Gastrocnemius medialis (tissue), 4 donors: ENCODE measurements at regions of chr16 and their contacts with region 1.

Region 1: DNA sequence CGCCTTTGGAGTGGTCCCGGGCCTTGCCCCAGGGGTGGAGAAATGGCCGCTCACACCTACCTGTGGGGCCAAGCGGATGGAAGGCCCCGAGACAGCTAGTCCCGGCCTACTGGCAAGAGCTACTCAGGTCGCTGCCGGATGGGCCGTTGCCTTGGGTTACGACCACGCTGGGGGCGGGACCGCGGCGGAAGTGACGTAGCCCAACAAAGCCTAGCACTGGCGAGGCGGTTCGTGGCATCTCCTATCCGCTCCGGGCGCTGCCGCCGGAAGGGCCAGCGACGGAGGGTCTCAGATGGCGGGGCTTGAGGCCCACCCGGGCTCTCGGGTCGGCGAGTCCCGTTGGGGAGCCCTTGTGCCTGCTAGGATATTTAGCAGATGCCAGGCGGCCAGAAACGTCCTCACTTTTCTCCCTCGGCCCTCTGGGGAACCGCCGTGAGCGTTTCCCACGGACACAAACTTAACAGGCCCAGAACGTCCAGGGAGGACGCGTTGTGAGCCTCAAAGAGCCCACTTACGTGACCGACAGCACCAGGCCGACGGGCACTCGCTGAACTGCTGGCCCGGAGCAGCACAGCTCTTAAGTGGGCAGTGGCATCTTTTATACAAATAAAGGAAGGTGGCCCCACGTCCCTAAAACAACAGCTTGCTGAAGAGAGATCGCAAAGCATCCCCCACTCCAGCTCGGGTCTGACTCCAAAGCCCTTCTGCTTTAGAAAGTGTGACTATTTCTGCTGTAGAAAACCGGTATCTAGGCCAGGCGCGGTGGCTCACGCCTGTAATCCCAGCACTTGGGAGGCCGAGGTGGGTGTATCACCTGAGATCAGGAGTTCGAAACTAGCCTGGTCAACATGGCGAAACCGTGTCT is at the start of gene C16orf46:
- DNase-seq: peak; percentile 94 to 95
- ATAC-seq: peak; percentile 94 to 97
- H3K4me3 ChIP-seq: peak within 1 kb of the TSS; percentile 73 to 90 (median 82)
- H3K27ac ChIP-seq: peak within 1 kb of the TSS; percentile 90 to 99 (median 94)
- H3K4me1 ChIP-seq: peaks cover 4 to 7% of the 10 kb centered on the region in 2 donors
- H3K27me3 ChIP-seq: no peaks in the 10 kb centered on the region
- CTCF ChIP-seq: no peak
- POLR2A ChIP-seq: peak; percentile 77 to 85
- total RNA-seq, gene C16orf46: 0.88 TPM in 1 of 4 donors, not detected in the others

Region 2: GRCh38 chr16:81095953-81096717 is 18.8 kb after region 1 on chr16 and contains the start of gene GCSH:
- in situ Hi-C with region 1: no loop called
- intact Hi-C with region 1: loop called (anchors 1 kb)
- DNase-seq: peak; percentile 99
- ATAC-seq: peak; percentile 95
- H3K4me3 ChIP-seq: peak within 1 kb of the TSS; percentile 71 to 97 (median 86)
- H3K27ac ChIP-seq: peak within 1 kb of the TSS; percentile 80 to 93 (median 90)
- H3K4me1 ChIP-seq: peaks cover 5 to 7% of the 10 kb centered on the region in 2 donors
- H3K27me3 ChIP-seq: no peaks in the 10 kb centered on the region
- CTCF ChIP-seq: no peak
- POLR2A ChIP-seq: peak; percentile 58 to 67
- total RNA-seq, gene GCSH: 18.5 to 40.4 (median 30.9) TPM

Region 3: GRCh38 chr16:81181013-81181720 is 103.9 kb after region 1 on chr16:
- in situ Hi-C with region 1: no loop called
- intact Hi-C with region 1: loop called (anchors 2 kb)
- DNase-seq: peak; percentile 87 to 92
- ATAC-seq: peak; percentile 97
- H3K4me3 ChIP-seq: peak overlapping the region in 2 of 4 donors; percentile 12 to 36
- H3K27ac ChIP-seq: peak overlapping the region; percentile 75 to 94 (median 83)
- H3K4me1 ChIP-seq: peaks cover 6 to 9% of the 10 kb centered on the region in 2 donors
- H3K27me3 ChIP-seq: no peaks in the 10 kb centered on the region
- CTCF ChIP-seq: no peak
- POLR2A ChIP-seq: no peak

Region 4: GRCh38 chr16:81238296-81239011 is 161.1 kb after region 1 on chr16 and contains the start of gene BCO1:
- in situ Hi-C with region 1: no loop called
- intact Hi-C with region 1: loop called (anchors 1 kb)
- DNase-seq: no peak
- ATAC-seq: peak; percentile 9 to 13
- H3K4me3 ChIP-seq: peak within 1 kb of the TSS; percentile 13 to 47 (median 25)
- H3K27ac ChIP-seq: peak within 1 kb of the TSS; percentile 71 to 83 (median 76)
- H3K4me1 ChIP-seq: peaks cover 10 to 13% of the 10 kb centered on the region in 2 donors
- H3K27me3 ChIP-seq: no peaks in the 10 kb centered on the region
- CTCF ChIP-seq: no peak
- POLR2A ChIP-seq: no peak
- total RNA-seq, gene BCO1: not detected